AG04450 (cell line): ENCODE measurements at regions of chr15 and their contacts with region 1.

Region 1: DNA sequence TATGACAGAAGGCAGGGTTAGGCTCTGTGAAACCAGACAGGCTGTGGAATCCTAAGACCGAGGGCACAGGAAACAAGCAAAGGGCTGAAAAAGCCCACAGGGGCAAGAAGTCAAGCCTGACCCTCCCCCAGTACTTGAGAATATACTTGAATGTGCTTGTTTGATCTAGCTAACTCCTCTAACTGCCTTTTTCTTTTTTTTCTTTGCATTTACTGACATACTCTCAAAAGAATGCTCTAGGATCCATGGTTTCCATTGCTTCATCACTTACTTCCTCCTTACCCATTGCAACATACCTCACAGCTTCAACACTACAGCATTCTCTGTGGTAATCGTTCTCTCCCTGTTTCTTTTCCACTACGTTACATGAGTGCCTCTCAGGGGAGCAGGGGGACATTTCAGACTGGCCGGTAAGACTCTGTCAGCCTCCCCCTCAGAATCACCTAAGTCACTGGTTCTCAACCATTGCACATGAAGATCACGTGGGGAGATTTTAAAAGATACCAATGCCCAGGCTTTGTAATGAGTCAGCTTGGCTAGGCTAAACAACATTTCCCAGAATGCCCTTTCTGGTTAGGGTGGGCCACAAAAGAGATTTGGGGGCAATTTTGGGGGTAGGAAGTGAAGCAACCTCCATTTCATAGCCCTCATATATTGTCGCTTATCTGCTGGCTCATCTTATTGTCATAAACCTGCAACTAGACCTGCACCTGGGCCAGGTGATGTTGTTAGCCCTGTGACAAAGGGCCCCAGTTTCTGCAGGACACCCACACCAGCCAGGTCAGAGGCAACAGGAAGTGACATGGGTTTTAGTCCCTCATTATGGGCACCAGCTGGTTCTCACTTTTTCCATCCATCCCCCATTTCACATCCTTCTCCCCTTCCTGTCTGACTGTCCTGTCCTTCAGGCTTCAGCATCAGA is 24.6 kb upstream of the RSL24D1 start:
- DNase-seq: peak; percentile 89
- H3K4me3 ChIP-seq: peak overlapping the region; percentile 17; the same call in 1 of the 2 replicates
- H3K27ac ChIP-seq: peak overlapping the region; percentile 87
- H3K27me3 ChIP-seq: no peaks in the 10 kb centered on the region
- CTCF ChIP-seq: no peak

Region 2: DNA sequence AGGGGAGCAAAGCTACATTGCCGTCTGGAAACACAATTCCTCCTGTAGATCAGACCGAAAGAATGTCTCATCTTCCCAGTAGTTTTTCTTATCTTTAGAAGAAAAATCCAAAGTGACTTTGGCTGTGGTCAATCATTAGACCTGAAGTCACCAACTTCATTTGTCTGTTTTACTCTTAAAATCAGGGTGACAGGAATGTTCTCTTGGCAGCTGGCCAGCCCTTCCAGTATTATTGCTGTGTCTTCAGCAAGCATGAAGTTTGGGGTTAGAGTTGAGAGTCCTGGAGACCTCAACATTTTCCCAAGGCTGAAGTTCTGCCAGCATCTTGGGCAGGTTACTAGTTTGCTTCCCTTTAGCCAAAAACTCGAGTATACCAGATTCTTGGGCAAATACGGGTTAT is 57.1 kb before region 1 on chr15:
- CTCF ChIA-PET with region 1: no interaction called
- POLR2A ChIA-PET with region 1: no interaction called
- DNase-seq: no peak
- H3K4me3 ChIP-seq: no peak overlapping the region
- H3K27ac ChIP-seq: no peak overlapping the region
- H3K27me3 ChIP-seq: no peaks in the 10 kb centered on the region
- CTCF ChIP-seq: no peak

Region 3: GRCh38 chr15:55196458-55197361 is 24.6 kb before region 1 on chr15 and contains the start of gene RSL24D1:
- CTCF ChIA-PET with region 1: interaction called, 15 read pairs
- POLR2A ChIA-PET with region 1: no interaction called
- DNase-seq: peak; percentile 97
- H3K4me3 ChIP-seq: peak within 1 kb of the TSS; percentile 92
- H3K27ac ChIP-seq: peak within 1 kb of the TSS; percentile 94
- H3K27me3 ChIP-seq: no peaks in the 10 kb centered on the region
- CTCF ChIP-seq: peak; percentile 45
- polyA plus RNA-seq, gene RSL24D1: 84.6 and 119 TPM in 2 replicates

Region 4: GRCh38 chr15:55267401-55268175 is 46.2 kb after region 1 on chr15:
- CTCF ChIA-PET with region 1: interaction called, 13 read pairs
- POLR2A ChIA-PET with region 1: interaction called, 3 read pairs
- DNase-seq: no peak
- H3K4me3 ChIP-seq: no peak overlapping the region; the same call in 1 of the 2 replicates
- H3K27ac ChIP-seq: peak overlapping the region; percentile 68
- H3K27me3 ChIP-seq: no peaks in the 10 kb centered on the region
- CTCF ChIP-seq: no peak

Region 5: GRCh38 chr15:55290528-55291057 is 69.2 kb after region 1 on chr15:
- CTCF ChIA-PET with region 1: interaction called, 138 read pairs
- POLR2A ChIA-PET with region 1: interaction called, 7 read pairs
- DNase-seq: peak; percentile 39
- H3K4me3 ChIP-seq: peak overlapping the region; percentile 90
- H3K27ac ChIP-seq: peak overlapping the region; percentile 89
- H3K27me3 ChIP-seq: no peaks in the 10 kb centered on the region
- CTCF ChIP-seq: peak; percentile 95

Region 6: GRCh38 chr15:55434989-55435825 is 213.9 kb after region 1 on chr15:
- CTCF ChIA-PET with region 1: interaction called, 55 read pairs
- POLR2A ChIA-PET with region 1: no interaction called
- DNase-seq: peak; percentile 37
- H3K4me3 ChIP-seq: no peak overlapping the region
- H3K27ac ChIP-seq: no peak overlapping the region
- H3K27me3 ChIP-seq: no peaks in the 10 kb centered on the region
- CTCF ChIP-seq: peak; percentile 75